Psoas muscle (tissue), 8 donors: ENCODE measurements at regions of chrX and their contacts with region 1.

Region 1: DNA sequence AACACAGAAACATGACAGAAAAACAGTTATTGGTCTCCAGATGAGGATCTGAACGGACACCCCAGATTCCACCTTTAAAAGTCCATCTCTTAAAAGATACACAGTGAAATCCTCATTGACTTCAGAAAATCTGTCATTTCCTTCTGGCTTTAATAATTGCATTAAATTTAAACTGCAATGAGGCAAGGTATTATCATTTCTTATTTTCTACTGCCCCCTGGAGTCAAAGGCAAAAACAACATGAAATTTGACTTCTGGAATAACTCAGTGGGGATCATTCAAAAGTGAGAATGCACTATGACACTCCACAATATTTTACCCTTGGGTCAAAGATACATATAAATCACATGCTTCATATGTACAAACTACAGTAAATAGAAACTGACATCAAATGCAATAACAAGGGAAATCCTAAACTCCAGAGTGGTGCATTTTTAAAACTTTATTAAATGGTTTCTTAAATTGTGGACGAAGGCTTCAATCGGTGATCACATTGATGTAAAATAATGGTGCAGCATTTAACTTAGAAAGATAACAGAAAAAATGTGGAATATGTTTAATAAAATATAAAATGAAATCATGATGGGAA is 56.4 kb upstream of the SPANXN1 start:
- DNase-seq: no peak
- ATAC-seq: no peak
- H3K4me3 ChIP-seq: no peak overlapping the region
- H3K27ac ChIP-seq: no peak overlapping the region
- H3K4me1 ChIP-seq: no peaks in the 10 kb centered on the region
- H3K27me3 ChIP-seq: no peaks in the 10 kb centered on the region
- CTCF ChIP-seq: peak; percentile 35

Region 2: GRCh38 chrX:143669395-143669794 is 1521.5 kb before region 1 on chrX:
- intact Hi-C with region 1: loop called in 1 of 2 experiments (anchors 5 kb)
- DNase-seq: no peak
- ATAC-seq: no peak
- H3K4me3 ChIP-seq: no peak overlapping the region
- H3K27ac ChIP-seq: no peak overlapping the region
- H3K4me1 ChIP-seq: no peaks in the 10 kb centered on the region
- H3K27me3 ChIP-seq: no peaks in the 10 kb centered on the region
- CTCF ChIP-seq: no peak